ENCODE measurements at regions of chr7 and their contacts with region 1.

Region 1: GRCh38 chr7:24891311-24891735 is 88.7 kb downstream of the OSBPL3 start:
- DNase-seq: no peak
- ATAC-seq: no peak
- H3K4me3 Mint-ChIP-seq: no peak overlapping the region
- H3K27ac Mint-ChIP-seq: no peak overlapping the region
- H3K4me1 Mint-ChIP-seq: peaks cover 30% of the 10 kb centered on the region
- H3K27me3 Mint-ChIP-seq: no peaks in the 10 kb centered on the region

Region 2: DNA sequence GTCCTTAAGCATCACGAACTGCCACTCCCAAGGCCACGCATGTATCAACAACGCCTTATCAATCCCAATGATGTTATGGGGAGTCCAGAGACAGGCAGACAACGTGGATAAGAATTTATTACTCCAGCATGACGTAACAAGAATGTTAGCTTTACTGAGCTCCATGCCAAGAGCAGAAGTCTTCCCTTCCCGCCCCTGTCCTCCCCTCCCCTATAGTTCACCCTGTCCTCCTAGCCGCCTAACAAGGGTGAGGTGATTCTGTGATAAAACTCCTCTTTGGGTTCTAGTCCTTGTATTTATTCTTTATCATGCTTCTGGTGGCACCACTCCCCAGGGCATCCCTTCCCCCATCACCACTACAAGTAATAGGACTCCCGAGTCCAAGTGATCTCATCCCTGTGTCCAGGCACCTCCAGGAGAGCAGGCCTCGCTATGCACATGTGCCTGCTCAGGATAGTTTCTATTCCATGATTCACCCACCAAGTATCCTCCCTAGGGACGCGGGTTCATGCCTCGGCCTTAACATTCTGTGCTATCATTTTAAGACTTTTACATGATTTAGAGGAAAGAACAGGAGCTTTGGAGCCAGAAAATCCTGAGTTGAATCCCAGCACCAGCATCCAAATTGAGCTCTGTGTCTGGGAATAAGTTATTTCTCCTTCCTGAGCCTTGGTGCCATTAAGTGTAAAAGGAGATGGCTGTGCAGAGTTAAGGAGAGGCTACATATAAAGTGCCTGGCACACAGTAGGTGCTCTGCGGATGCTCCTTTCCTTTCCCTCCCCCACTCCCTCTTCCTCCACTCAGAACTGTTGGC is 149.4 kb before region 1 on chr7:
- CTCF ChIA-PET with region 1: no interaction called
- POLR2A ChIA-PET with region 1: no interaction called
- intact Hi-C with region 1: no loop called
- DNase-seq: no peak
- ATAC-seq: no peak
- H3K4me3 Mint-ChIP-seq: no peak overlapping the region
- H3K27ac Mint-ChIP-seq: no peak overlapping the region
- H3K4me1 Mint-ChIP-seq: no peaks in the 10 kb centered on the region
- H3K27me3 Mint-ChIP-seq: peaks cover 20% of the 10 kb centered on the region

Region 3: DNA sequence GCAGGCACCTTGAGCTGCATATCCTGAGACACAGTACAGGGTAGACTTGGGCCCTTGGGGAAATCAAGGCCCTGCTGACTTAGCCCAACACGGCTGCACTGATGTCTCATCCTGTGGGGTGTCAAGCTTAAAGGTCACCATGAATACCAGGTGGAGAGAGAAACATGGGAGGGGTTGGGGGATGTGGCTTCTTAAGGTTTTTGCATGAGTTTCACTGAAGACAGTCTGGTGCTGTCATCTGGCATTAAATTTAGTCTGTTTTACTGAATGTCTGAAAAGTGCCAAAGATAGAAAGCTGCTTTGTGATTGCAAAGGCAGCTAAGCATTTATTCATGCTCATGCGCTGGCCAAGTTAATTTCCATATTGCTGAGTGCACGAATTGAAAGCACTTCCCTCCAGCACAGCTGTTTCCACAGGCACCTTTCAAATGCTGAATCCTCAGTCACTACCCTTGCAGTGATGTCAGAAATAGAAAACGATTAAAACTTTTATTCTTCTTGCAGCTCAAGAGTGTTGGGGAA is 13.5 kb before region 1 on chr7:
- CTCF ChIA-PET with region 1: interaction called, 10 read pairs
- POLR2A ChIA-PET with region 1: no interaction called
- intact Hi-C with region 1: no loop called
- DNase-seq: peak; percentile 59
- ATAC-seq: peak; percentile 78
- H3K4me3 Mint-ChIP-seq: peak overlapping the region; percentile 29
- H3K27ac Mint-ChIP-seq: peak overlapping the region; percentile 69
- H3K4me1 Mint-ChIP-seq: peaks cover 56% of the 10 kb centered on the region
- H3K27me3 Mint-ChIP-seq: no peaks in the 10 kb centered on the region